ENCODE measurements at regions of chr19 and their contacts with region 1.

Region 1: DNA sequence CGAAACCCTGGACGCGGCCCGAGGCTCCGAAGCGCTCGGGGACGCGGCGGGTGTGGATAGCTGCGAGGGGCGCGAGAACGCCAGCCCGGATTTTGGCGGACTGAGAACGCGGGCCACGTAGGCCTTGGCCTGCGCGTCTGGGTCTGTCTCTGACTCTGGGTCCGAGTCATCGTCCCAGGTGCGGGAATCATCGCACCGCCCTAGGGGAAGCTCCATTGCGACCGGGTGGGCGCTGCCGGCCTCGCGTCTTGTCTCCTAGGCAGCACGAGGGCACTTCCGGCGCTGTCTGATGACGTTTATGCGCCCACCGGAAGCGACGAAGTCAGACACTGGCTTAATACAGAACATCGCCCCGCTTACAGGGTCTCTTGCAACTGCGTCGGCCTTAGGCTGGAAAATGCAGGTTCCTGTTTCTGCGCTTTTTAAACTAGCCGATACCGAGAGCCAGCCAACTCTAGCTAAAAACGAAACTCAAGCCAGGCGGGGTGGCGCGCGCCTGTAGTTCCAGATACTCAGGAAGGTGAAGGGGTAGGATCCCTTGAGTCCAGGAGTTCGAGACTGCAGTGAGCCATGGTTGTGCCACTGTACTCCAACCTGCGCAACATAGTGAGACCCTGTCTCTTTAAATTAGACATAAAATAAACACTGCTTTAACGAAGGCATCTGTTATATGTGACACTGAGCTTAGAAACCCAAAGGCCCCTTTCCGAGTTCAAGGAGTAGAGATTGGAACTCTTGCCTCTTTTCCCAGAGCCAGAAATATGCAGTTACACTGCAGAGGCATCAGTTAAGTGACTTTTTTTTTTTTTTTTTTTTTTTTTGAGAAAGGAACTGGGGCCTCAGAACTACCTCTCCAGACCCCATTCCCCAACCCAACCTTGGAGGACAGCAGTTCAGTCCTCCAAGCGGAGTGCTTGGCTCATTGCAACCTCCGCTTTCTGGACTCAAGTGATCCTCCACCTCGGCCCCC is at the start of gene FBXW9:
- DNase-seq: peak; percentile 94
- H3K4me3 Mint-ChIP-seq: peak within 1 kb of the TSS; percentile 89
- H3K27ac Mint-ChIP-seq: peak within 1 kb of the TSS; percentile 93
- H3K4me1 Mint-ChIP-seq: peaks cover 11% of the 10 kb centered on the region
- H3K27me3 Mint-ChIP-seq: no peaks in the 10 kb centered on the region
- total RNA-seq, gene FBXW9: 11.8 and 12.2 TPM in 2 replicates

Region 2: DNA sequence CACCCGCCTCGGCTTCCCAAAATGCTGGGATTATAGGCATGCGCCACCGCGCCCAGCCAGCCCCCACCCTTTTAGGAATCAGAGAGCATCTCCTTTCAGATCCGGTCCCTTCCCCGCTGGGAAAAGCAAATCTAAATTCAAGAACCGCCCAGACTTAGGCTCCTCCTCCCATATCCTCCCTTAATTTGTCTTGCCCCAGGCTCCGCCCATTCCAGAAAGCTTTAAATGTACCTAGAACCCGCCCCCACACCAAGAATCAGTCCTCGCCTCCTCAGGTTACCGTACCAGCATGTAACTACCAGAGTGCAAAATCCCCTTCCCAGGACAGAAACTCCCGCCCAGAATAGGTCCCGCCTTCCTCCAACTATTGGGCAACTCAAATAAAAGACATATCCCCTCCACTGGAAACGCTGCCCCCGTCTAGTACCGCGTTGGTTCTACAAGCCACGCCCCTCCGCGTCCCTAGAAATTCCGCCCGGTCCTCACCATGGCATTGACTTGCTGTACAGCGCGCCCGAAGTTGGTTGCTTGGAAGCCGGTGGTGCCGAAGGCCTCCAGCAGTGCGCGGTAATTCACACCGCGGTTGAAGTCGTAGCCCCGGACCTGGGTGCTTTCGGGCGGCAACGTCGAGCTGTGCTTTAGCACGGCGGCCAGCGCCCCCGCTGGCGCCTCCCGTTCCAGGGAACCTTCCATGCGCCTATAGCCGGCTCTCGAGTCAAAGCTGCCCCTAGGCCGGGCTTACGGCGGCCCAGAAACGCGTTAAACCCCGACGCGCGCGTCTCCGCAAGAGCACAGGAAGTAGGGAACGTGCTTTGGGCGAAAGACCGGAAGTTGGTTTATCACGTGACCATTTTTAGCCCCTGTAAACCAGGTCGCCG is 15.3 kb before region 1 on chr19 and contains the start of gene DHPS:
- intact Hi-C with region 1: loop called (anchors 1 kb)
- DNase-seq: peak; percentile 89
- H3K4me3 Mint-ChIP-seq: peak within 1 kb of the TSS; percentile 86
- H3K27ac Mint-ChIP-seq: peak within 1 kb of the TSS; percentile 88
- H3K4me1 Mint-ChIP-seq: peaks cover 12% of the 10 kb centered on the region
- H3K27me3 Mint-ChIP-seq: no peaks in the 10 kb centered on the region
- total RNA-seq, gene DHPS: 144 and 147 TPM in 2 replicates

Region 3: GRCh38 chr19:12806239-12807081 is 109.8 kb after region 1 on chr19 and contains the start of gene RNASEH2A:
- intact Hi-C with region 1: loop called (anchors 1 kb)
- DNase-seq: peak; percentile 89
- H3K4me3 Mint-ChIP-seq: peak within 1 kb of the TSS; percentile 96
- H3K27ac Mint-ChIP-seq: peak within 1 kb of the TSS; percentile 89
- H3K4me1 Mint-ChIP-seq: peaks cover 17% of the 10 kb centered on the region
- H3K27me3 Mint-ChIP-seq: no peaks in the 10 kb centered on the region
- total RNA-seq, gene RNASEH2A: 36.1 and 37.5 TPM in 2 replicates

Measured in activated T-helper 1 cell treated with anti-CD3 and anti-CD28 coated beads, Interleukin-12 subunit alpha, Interleukin-12 subunit beta, Interleukin-2, Interleukin-4 antibody, amounts not matched to agents 30 ng/mL and 10 ng/mL and 1 ng/mL, durations not matched to agents 14 hours and 24 hours and 36 hours (primary cell).